OCI-LY7 (cell line): ENCODE measurements at regions of chr11 and their contacts with region 1.

Region 1: GRCh38 chr11:64240394-64241174 is at the start of gene FKBP2:
- DNase-seq: peak; percentile 98
- H3K4me3 ChIP-seq: peak within 1 kb of the TSS; percentile 81
- H3K27ac ChIP-seq: peak within 1 kb of the TSS; percentile 91
- H3K4me1 ChIP-seq: peaks cover 50% of the 10 kb centered on the region
- CTCF ChIP-seq: no peak
- total RNA-seq, gene FKBP2: 57.3 and 70.6 TPM in 2 replicates

Region 2: DNA sequence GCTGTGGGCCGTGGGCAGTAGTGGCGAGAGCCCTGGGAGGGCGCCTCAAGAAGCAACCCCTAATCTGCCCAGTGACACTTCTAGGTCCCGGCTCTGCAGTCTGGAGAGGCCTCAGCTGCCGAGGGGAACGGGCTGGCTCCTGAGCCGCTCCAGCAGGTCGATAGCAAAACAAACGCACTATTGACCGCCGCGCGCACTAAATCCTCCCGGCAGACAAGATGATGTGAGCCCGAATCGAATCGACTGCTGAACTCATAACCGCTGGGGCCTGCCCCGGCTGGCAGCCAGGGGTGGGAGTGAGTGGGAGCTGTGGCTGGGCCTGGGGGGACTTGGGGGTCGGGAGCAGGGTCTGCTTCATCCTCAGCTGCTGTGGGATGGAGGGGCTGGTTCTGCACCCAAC is 168.7 kb before region 1 on chr11:
- CTCF ChIA-PET with region 1: no interaction called
- POLR2A ChIA-PET with region 1: no interaction called
- intact Hi-C with region 1: no loop called
- DNase-seq: no peak
- H3K4me3 ChIP-seq: no peak overlapping the region
- H3K27ac ChIP-seq: no peak overlapping the region
- H3K4me1 ChIP-seq: no peaks in the 10 kb centered on the region
- CTCF ChIP-seq: no peak

Region 3: DNA sequence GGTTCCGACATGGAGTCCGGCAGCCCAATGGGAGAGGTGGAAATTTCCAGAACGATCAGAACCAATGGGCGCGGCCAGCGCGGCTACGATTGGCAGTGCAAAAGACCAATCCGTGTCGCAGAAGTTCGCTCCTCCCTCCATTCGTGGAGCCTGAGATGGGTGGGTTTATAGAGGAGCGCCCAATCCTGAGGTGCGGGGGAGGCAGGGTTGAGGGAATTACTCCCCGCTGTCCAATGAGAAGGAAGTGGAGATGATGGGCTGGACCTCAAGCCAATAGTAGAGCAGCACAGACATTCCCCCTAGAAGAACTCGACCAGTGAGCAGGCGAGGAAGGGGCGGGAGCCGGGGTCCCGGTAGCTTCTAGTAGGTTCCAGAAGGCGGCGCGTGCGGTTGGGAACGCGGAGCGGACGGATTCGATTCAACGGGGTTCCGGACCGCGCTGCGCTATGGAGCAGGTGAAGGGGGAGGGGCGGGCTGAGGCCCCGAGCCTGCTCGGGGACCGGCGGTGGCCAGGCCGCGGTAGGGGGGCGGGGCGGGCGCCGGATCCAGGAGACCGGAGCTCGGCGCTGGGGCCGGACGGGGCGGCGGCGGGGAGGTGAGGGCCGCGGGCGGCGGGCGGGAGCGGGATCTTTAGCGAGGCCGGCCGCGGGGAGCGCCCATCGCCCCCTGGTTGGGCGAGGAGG is 54.6 kb before region 1 on chr11 and contains the start of gene STIP1:
- CTCF ChIA-PET with region 1: no interaction called
- POLR2A ChIA-PET with region 1: interaction called, 6 read pairs
- intact Hi-C with region 1: loop called (anchors 2 kb)
- DNase-seq: peak; percentile 100
- H3K4me3 ChIP-seq: peak within 1 kb of the TSS; percentile 75
- H3K27ac ChIP-seq: peak within 1 kb of the TSS; percentile 59
- H3K4me1 ChIP-seq: peaks cover 30% of the 10 kb centered on the region
- CTCF ChIP-seq: 0 out of 2 replicates have a peak, but pooled peaks have one; percentile 19
- total RNA-seq, gene STIP1: 271 and 309 TPM in 2 replicates

Region 4: GRCh38 chr11:64225612-64226506 is 14.7 kb before region 1 on chr11 and contains the starts of genes NUDT22 and TRPT1:
- CTCF ChIA-PET with region 1: no interaction called
- POLR2A ChIA-PET with region 1: interaction called, 9 read pairs
- intact Hi-C with region 1: loop called (anchors 1 kb)
- DNase-seq: peak; percentile 95
- H3K4me3 ChIP-seq: peak within 1 kb of the TSS; percentile 83
- H3K27ac ChIP-seq: peak within 1 kb of the TSS; percentile 77
- H3K4me1 ChIP-seq: peaks cover 33% of the 10 kb centered on the region
- CTCF ChIP-seq: peak; percentile 66
- total RNA-seq, gene NUDT22: 54.6 and 81.4 TPM in 2 replicates
- total RNA-seq, gene TRPT1: 35.7 and 49.0 TPM in 2 replicates

Region 5: GRCh38 chr11:64251016-64251752 is 10.6 kb after region 1 on chr11 and contains the start of gene PLCB3:
- CTCF ChIA-PET with region 1: no interaction called
- POLR2A ChIA-PET with region 1: no interaction called
- intact Hi-C with region 1: no loop called
- DNase-seq: peak; percentile 70
- H3K4me3 ChIP-seq: peak within 1 kb of the TSS; percentile 76
- H3K27ac ChIP-seq: no peak within 1 kb of the TSS
- H3K4me1 ChIP-seq: peaks cover 55% of the 10 kb centered on the region
- CTCF ChIP-seq: peak; percentile 80
- total RNA-seq, gene PLCB3: 7.6 and 8.6 TPM in 2 replicates

Region 6: DNA sequence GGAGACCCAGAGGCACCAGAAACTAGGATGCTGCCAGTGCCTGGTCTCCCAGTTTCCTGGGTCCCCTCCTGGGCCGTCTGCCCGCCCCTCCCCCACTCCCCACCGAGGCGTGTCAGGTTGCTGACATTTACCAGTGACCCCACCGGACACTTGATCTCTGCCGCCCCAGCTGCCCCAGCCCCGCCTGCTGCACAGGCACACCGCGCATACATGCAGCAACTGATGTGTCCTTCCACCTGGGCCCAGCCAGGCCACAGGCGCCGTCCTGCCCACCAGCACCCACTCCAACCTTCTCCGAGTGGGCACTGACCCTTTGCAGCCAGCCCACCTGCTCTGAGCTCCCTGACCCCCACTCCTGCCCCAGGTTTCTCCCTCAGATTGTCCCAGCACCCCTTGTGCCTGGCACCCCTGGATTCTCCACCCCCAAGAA is 518.6 kb after region 1 on chr11:
- CTCF ChIA-PET with region 1: no interaction called
- POLR2A ChIA-PET with region 1: no interaction called
- intact Hi-C with region 1: no loop called
- DNase-seq: no peak
- H3K4me3 ChIP-seq: no peak overlapping the region
- H3K27ac ChIP-seq: no peak overlapping the region
- H3K4me1 ChIP-seq: peaks cover 35% of the 10 kb centered on the region
- CTCF ChIP-seq: no peak